Common myeloid progenitor, CD34-positive (primary cell): ENCODE measurements at regions of chr2 and their contacts with region 1.

Region 1: DNA sequence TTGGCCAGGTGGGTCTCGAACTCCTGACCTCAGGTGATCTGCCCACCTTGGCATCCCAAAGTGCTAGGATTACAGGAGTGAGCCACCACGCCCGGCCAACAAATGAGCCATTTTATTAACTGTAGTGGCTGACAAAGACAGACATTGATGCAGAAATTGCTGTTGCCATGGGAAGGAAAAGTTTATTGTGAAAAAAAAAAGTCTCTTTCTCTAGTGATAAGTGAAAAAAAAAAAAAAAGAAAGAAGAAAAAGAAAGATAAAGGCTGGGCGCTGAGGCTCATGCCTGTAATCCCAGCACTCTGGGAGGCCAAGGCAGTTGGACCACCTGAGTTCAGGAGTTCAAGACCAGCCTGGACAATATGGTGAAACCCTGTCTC is 39.8 kb upstream of the RAB1A start:
- DNase-seq: peak in 1 of 3 donors; percentile 7
- H3K4me3 ChIP-seq: no peak overlapping the region
- H3K27ac ChIP-seq: no peak overlapping the region
- H3K4me1 ChIP-seq: peaks cover 8 to 18% (median 14%) of the 10 kb centered on the region in 4 experiments
- H3K27me3 ChIP-seq: no peaks in the 10 kb centered on the region

Region 2: DNA sequence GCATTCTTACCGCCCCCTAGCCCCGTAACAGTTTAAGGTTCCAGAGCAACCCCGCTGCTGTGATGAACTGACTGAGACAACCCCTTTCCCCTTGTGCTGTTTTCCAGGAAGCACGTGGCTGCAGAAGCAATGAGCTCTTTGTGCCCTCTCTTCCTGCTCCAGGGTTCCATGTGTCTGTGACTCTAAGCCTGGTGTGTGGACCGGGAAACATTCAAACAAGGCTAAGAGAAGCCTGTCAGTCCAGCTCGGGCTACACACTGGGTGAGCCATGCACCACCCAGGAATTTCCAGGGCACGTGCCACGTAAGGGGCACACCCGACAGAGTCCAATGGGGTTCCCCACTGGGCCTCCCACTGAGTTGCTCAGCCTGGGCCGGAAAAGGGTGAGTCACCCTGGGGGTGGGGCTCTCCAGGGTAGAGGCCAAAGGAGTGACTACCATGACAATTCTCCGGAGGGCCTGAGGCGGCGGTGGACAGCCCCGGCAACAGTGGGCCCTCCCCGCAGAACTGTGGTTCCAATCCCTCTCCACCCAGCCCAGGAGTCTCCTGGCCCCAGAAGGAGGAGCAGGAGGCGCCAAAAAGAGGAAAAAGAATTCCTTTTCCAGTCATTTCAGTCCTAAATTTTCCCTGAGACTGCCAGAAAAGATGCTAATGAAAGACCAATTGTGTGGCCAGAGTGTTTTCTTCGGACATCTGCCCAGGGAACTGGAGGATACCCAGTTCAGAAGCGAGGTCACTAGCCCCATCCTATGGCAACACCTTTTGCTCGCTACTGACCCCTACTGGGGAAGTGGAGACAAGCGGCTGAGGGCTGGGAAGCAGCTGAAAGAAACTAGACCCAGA is 338.4 kb before region 1 on chr2:
- CTCF ChIA-PET with region 1: no interaction called
- POLR2A ChIA-PET with region 1: no interaction called
- DNase-seq: peak; percentile 57 to 77 (median 74)
- H3K4me3 ChIP-seq: no peak overlapping the region
- H3K27ac ChIP-seq: peak overlapping the region in 1 of 2 experiments; percentile 55
- H3K4me1 ChIP-seq: peaks cover 0 to 9% (median 3%) of the 10 kb centered on the region in 4 experiments
- H3K27me3 ChIP-seq: no peaks in the 10 kb centered on the region

Region 3: DNA sequence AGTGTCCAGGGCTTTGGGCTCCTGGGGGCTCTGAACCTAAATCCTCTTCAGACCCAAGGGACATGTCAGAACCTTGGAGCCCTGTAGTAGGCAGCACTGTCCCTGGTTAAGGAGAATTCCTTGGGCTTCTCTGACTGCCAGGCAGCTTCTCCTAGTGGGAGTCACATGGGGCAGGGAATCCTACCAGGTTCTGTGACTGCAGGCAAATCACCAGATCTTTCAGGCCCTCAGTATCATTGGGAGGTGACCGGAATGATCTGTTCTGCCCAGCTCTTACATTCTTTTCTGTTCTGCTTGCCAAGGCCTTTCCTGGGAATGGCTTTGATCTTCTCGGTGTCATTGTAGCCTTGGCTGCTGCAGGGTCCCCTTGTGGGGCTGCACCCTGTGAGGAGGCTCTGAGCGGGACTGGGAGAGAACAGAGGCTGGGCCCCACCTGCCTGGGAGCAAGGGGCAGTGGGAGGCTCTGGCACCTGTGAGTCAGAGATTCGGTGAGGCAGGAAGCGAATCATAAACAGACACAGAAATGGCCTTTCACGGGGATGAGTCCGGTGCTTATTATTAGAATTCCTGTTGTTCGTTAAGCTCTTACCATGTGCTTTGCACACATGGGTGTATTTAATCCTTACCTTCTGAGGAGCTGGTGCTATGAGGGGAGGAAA is 99.4 kb before region 1 on chr2:
- CTCF ChIA-PET with region 1: interaction called, 131 read pairs
- POLR2A ChIA-PET with region 1: interaction called, 3 read pairs
- DNase-seq: no peak
- H3K4me3 ChIP-seq: no peak overlapping the region
- H3K27ac ChIP-seq: no peak overlapping the region
- H3K4me1 ChIP-seq: peaks cover 6 to 46% (median 42%) of the 10 kb centered on the region in 4 experiments
- H3K27me3 ChIP-seq: no peaks in the 10 kb centered on the region

Region 4: DNA sequence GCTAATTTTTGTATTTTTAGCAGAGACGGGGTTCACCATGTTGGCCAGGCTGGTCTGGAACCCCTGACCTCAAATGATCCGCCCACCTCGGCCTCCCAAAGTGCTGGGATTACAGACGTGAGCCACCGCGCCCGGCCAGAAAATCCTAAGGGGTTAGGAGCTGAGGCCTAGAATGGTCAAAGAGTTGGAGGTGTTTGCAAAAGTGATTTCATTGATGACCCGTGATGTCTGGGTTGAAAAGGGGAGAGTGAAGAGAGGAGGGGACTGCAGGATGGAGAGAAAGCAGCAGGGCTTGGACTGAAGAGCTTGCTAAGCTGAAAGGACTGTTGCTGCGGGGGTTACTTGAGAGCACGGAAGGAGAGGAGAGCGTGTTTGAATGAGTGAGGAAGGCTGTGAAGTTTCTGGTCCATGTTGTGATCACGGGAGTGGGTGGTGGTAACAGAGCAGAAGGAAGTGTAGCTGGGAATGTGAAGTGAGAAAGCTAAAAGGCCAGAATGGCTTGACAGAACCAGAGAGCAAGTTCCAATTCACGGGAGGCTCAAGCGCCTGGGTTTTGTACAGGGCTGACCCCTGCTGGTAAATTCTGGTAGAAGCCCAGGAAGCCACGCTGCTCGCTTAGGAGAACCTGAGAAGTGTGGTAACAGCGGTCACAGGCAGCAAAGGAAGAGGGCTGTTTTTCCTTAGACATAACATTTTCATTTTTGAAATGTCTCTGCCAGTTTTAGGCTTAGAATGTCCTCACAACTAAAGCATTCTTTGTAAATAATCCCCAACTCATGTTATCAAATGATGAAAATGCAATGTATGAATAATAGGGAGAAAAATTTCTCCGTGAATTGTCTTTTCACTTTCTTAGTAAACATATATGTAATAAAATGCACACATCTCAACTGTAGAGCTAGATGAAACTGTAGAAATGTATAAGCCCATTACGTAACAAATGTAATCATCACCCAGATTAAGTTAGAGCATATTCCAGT is 17.4 kb after region 1 on chr2:
- CTCF ChIA-PET with region 1: interaction called, 14 read pairs
- POLR2A ChIA-PET with region 1: interaction called, 5 read pairs
- DNase-seq: peak; percentile 76 to 87 (median 83)
- H3K4me3 ChIP-seq: no peak overlapping the region
- H3K27ac ChIP-seq: no peak overlapping the region
- H3K4me1 ChIP-seq: peaks cover 0 to 4% (median 3%) of the 10 kb centered on the region in 4 experiments
- H3K27me3 ChIP-seq: no peaks in the 10 kb centered on the region